ENCODE measurements at regions of chr18 and their contacts with region 1.

Region 1: GRCh38 chr18:56982766-56983165 is 164.1 kb upstream of the BOD1L2 start:
- DNase-seq: no peak
- ATAC-seq: no peak
- H3K4me3 ChIP-seq: no peak overlapping the region
- H3K27ac ChIP-seq: no peak overlapping the region
- H3K4me1 ChIP-seq: peaks cover 17% of the 10 kb centered on the region
- H3K27me3 ChIP-seq: no peaks in the 10 kb centered on the region
- CTCF ChIP-seq: no peak
- EP300 ChIP-seq: no peak
- POLR2A ChIP-seq: no peak
- RAD21 ChIP-seq: no peak

Region 2: DNA sequence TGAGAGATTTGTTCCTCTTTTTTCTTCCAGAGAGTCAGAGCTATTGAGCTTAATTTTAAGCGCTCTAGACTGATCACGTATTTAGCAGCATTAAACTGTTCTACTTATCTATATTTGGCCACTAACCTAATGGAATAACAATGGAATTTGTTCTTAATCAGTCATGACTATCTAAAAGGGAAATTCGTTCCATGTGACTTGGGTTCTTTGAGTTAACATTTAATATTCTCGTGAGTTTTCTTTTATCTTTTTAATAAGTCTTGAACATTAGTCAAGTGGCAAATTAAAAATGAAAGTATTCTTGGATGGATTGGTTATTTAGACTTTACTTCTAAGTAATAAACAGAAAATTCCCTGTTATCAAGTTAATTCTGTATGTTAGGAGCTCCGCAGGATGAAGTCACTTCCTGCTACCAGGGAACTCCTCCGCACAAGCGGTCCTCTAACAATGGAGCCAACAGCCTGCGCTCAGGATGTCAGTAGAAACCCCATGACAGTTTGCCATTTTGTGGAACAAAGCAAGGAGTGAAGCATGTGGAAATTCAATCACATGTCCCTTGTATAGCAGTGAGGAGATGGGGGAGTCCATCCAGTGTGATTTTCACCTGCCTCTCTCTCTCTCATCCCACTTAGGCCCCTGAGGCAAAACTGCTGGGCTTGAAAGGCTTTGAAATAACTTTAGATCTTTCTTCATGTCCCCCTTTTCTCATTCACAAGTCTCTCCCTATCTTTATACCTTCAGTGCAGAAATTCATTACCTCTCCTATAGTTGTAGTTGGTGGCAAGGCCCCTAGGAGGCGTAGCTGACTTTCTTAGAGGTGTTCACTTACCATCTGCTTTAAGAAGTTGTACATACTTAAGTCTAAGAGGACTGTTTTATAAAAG is 193.5 kb before region 1 on chr18:
- CTCF ChIA-PET with region 1: no interaction called
- POLR2A ChIA-PET with region 1: no interaction called
- in situ Hi-C with region 1: no loop called
- intact Hi-C with region 1: loop called (anchors 10 kb)
- DNase-seq: peak; percentile 33
- ATAC-seq: peak; percentile 65
- H3K4me3 ChIP-seq: no peak overlapping the region
- H3K27ac ChIP-seq: no peak overlapping the region
- H3K4me1 ChIP-seq: no peaks in the 10 kb centered on the region
- H3K27me3 ChIP-seq: no peaks in the 10 kb centered on the region
- CTCF ChIP-seq: peak; percentile 55
- EP300 ChIP-seq: no peak
- POLR2A ChIP-seq: no peak
- RAD21 ChIP-seq: no peak

Region 3: DNA sequence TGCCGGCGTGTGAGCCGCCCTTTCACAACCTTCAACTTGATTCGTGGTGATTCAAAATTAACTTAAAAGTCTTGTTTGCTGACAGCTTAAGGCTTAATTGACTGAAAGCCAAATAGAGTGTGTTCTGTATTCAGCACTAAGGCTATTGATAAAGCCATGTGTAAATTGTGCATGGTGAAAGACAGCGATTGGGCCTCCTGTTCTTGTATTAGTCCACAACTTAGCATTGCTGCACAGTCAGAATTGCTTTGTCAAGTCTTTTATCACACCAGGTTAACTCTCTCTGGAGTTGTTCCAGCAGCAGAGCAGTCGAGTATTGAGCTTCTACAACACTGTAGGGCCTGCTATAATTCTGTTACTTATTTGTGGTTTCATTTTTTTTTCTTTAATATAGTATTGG is 121.5 kb before region 1 on chr18:
- CTCF ChIA-PET with region 1: no interaction called
- POLR2A ChIA-PET with region 1: no interaction called
- in situ Hi-C with region 1: no loop called
- intact Hi-C with region 1: no loop called
- DNase-seq: no peak
- ATAC-seq: no peak
- H3K4me3 ChIP-seq: no peak overlapping the region
- H3K27ac ChIP-seq: no peak overlapping the region
- H3K4me1 ChIP-seq: no peaks in the 10 kb centered on the region
- H3K27me3 ChIP-seq: no peaks in the 10 kb centered on the region
- CTCF ChIP-seq: no peak
- EP300 ChIP-seq: no peak
- POLR2A ChIP-seq: no peak
- RAD21 ChIP-seq: no peak

Region 4: GRCh38 chr18:58682429-58683069 is 1699.8 kb after region 1 on chr18:
- CTCF ChIA-PET with region 1: no interaction called
- POLR2A ChIA-PET with region 1: no interaction called
- in situ Hi-C with region 1: no loop called
- intact Hi-C with region 1: no loop called
- DNase-seq: peak; percentile 68
- ATAC-seq: no peak
- H3K4me3 ChIP-seq: no peak overlapping the region
- H3K27ac ChIP-seq: no peak overlapping the region
- H3K4me1 ChIP-seq: peaks cover 27% of the 10 kb centered on the region
- H3K27me3 ChIP-seq: no peaks in the 10 kb centered on the region; a peak in 1 of 5 replicates
- CTCF ChIP-seq: no peak
- EP300 ChIP-seq: no peak; a peak in 1 of 4 replicates
- POLR2A ChIP-seq: no peak
- RAD21 ChIP-seq: no peak